MCF 10A (cell line): ENCODE measurements at regions of chr4 and their contacts with region 1.

Region 1: DNA sequence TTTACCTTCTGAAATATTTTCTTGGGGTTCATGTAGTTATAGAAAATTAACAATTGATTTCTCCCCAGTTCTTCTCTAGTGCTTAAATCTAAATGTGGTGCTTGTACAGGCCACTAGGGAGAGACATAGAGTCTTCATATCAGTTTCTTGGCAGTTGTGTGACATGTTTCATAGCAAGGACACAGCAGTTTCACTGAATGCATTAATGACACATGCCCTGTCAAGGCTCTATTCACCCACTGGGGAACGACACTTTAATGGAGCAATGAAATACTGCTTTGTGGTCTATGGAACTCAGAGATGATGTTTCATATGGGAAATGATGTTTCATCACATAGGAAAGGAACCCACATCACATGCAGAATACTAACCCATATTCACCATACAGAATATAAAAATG is 2.8 kb downstream of the VEGFC start:
- DNase-seq: peak; percentile 68
- H3K4me3 Mint-ChIP-seq: peak overlapping the region; percentile 85
- H3K27ac Mint-ChIP-seq: no peak overlapping the region
- H3K4me1 Mint-ChIP-seq: peaks cover 45% of the 10 kb centered on the region
- H3K27me3 Mint-ChIP-seq: no peaks in the 10 kb centered on the region
- CTCF ChIP-seq: peak; percentile 49

Region 2: GRCh38 chr4:176377780-176378179 is 412.2 kb before region 1 on chr4:
- CTCF ChIA-PET with region 1: interaction called, 31 read pairs
- POLR2A ChIA-PET with region 1: interaction called, 3 read pairs
- intact Hi-C with region 1: loop called (anchors 1 kb)
- DNase-seq: peak; percentile 40
- H3K4me3 Mint-ChIP-seq: no peak overlapping the region
- H3K27ac Mint-ChIP-seq: no peak overlapping the region
- H3K4me1 Mint-ChIP-seq: peaks cover 8% of the 10 kb centered on the region
- H3K27me3 Mint-ChIP-seq: no peaks in the 10 kb centered on the region
- CTCF ChIP-seq: peak; percentile 72

Region 3: GRCh38 chr4:176563591-176563990 is 226.4 kb before region 1 on chr4:
- CTCF ChIA-PET with region 1: no interaction called
- POLR2A ChIA-PET with region 1: no interaction called
- intact Hi-C with region 1: loop called (anchors 2 kb)
- DNase-seq: peak; percentile 35
- H3K4me3 Mint-ChIP-seq: no peak overlapping the region
- H3K27ac Mint-ChIP-seq: no peak overlapping the region
- H3K4me1 Mint-ChIP-seq: peaks cover 5% of the 10 kb centered on the region
- H3K27me3 Mint-ChIP-seq: no peaks in the 10 kb centered on the region
- CTCF ChIP-seq: peak; percentile 10

Region 4: GRCh38 chr4:176660561-176660960 is 129.4 kb before region 1 on chr4:
- CTCF ChIA-PET with region 1: no interaction called
- POLR2A ChIA-PET with region 1: no interaction called
- intact Hi-C with region 1: no loop called
- DNase-seq: peak; percentile 44
- H3K4me3 Mint-ChIP-seq: no peak overlapping the region
- H3K27ac Mint-ChIP-seq: peak overlapping the region; percentile 35
- H3K4me1 Mint-ChIP-seq: no peaks in the 10 kb centered on the region
- H3K27me3 Mint-ChIP-seq: no peaks in the 10 kb centered on the region
- CTCF ChIP-seq: no peak

Region 5: GRCh38 chr4:176745902-176746301 is 44.1 kb before region 1 on chr4:
- CTCF ChIA-PET with region 1: no interaction called
- POLR2A ChIA-PET with region 1: no interaction called
- intact Hi-C with region 1: no loop called
- DNase-seq: no peak
- H3K4me3 Mint-ChIP-seq: no peak overlapping the region
- H3K27ac Mint-ChIP-seq: no peak overlapping the region
- H3K4me1 Mint-ChIP-seq: peaks cover 13% of the 10 kb centered on the region
- H3K27me3 Mint-ChIP-seq: no peaks in the 10 kb centered on the region
- CTCF ChIP-seq: no peak

Region 6: GRCh38 chr4:176778491-176778890 is 11.5 kb before region 1 on chr4:
- CTCF ChIA-PET with region 1: interaction called, 13 read pairs
- POLR2A ChIA-PET with region 1: interaction called, 25 read pairs
- intact Hi-C with region 1: no loop called
- DNase-seq: peak; percentile 66
- H3K4me3 Mint-ChIP-seq: peak overlapping the region; percentile 42
- H3K27ac Mint-ChIP-seq: peak overlapping the region; percentile 82
- H3K4me1 Mint-ChIP-seq: peaks cover 41% of the 10 kb centered on the region
- H3K27me3 Mint-ChIP-seq: no peaks in the 10 kb centered on the region
- CTCF ChIP-seq: no peak

Region 7: GRCh38 chr4:177008071-177008835 is 218.3 kb after region 1 on chr4:
- CTCF ChIA-PET with region 1: interaction called, 4 read pairs
- POLR2A ChIA-PET with region 1: interaction called, 8 read pairs
- intact Hi-C with region 1: loop called (anchors 2 kb)
- DNase-seq: peak; percentile 70
- H3K4me3 Mint-ChIP-seq: peak overlapping the region; percentile 66
- H3K27ac Mint-ChIP-seq: peak overlapping the region; percentile 91
- H3K4me1 Mint-ChIP-seq: peaks cover 27% of the 10 kb centered on the region
- H3K27me3 Mint-ChIP-seq: no peaks in the 10 kb centered on the region
- CTCF ChIP-seq: no peak

Region 8: DNA sequence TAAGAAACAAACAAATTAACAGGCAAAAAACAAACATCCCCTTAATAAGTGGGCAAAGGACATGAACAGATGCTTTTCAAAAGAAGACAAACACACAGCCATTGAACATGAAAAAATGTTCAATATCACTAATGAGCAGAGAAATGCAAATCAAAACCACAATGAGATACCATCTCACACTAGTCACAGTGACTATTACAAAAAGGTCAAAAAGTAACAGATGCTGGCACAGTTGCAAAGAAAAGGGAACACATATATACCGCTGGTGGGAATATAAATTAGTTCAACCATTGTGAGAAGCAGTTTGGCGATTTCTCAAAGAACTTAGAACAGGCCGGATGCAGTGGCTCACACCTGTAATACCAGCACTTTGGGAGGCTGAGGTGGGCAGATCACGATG is 373.6 kb after region 1 on chr4:
- CTCF ChIA-PET with region 1: no interaction called
- POLR2A ChIA-PET with region 1: no interaction called
- intact Hi-C with region 1: no loop called
- DNase-seq: no peak
- H3K4me3 Mint-ChIP-seq: no peak overlapping the region
- H3K27ac Mint-ChIP-seq: no peak overlapping the region
- H3K4me1 Mint-ChIP-seq: no peaks in the 10 kb centered on the region
- H3K27me3 Mint-ChIP-seq: no peaks in the 10 kb centered on the region
- CTCF ChIP-seq: no peak

Region 9: GRCh38 chr4:177339477-177340374 is 549.8 kb after region 1 on chr4:
- CTCF ChIA-PET with region 1: no interaction called
- POLR2A ChIA-PET with region 1: interaction called, 4 read pairs
- intact Hi-C with region 1: loop called (anchors 5 kb)
- DNase-seq: peak; percentile 55
- H3K4me3 Mint-ChIP-seq: no peak overlapping the region
- H3K27ac Mint-ChIP-seq: peak overlapping the region; percentile 46
- H3K4me1 Mint-ChIP-seq: peaks cover 11% of the 10 kb centered on the region
- H3K27me3 Mint-ChIP-seq: no peaks in the 10 kb centered on the region
- CTCF ChIP-seq: peak; percentile 73

Region 10: DNA sequence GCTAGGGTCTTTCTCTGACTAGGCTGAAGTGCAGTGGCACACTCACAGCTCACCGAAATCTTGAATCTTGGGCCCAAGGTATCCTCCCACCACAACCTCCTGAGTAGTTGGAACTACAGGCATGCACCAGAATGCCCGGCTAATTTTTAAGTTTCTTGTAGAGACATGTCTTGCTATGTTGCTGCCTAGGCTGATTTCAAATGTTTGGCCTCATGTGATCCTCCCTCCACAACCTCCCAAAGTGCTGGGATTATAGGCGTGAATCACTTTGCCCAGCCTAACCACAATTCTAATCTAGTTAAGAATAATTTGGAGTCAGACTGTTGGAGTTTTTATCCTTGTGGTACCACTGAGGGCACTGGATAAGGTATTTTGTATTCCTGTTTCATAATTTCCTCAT is 969.8 kb after region 1 on chr4:
- CTCF ChIA-PET with region 1: no interaction called
- POLR2A ChIA-PET with region 1: no interaction called
- intact Hi-C with region 1: no loop called
- DNase-seq: peak; percentile 11
- H3K4me3 Mint-ChIP-seq: no peak overlapping the region
- H3K27ac Mint-ChIP-seq: no peak overlapping the region
- H3K4me1 Mint-ChIP-seq: peaks cover 6% of the 10 kb centered on the region
- H3K27me3 Mint-ChIP-seq: no peaks in the 10 kb centered on the region
- CTCF ChIP-seq: no peak